Mucosa of descending colon (tissue), 3 donors: ENCODE measurements at regions of chr16 and their contacts with region 1.

Region 1: GRCh38 chr16:16021988-16022682 is 72.7 kb downstream of the ABCC1 start:
- DNase-seq: peak; percentile 86 to 91 (median 87)
- ATAC-seq: peak; percentile 96
- H3K4me3 ChIP-seq: no peak overlapping the region
- H3K4me1 ChIP-seq: peaks cover 20% of the 10 kb centered on the region
- CTCF ChIP-seq: no peak

Region 2: GRCh38 chr16:15636392-15636873 is 385.7 kb before region 1 on chr16:
- intact Hi-C with region 1: no loop called
- DNase-seq: no peak
- ATAC-seq: peak; percentile 58
- H3K4me3 ChIP-seq: no peak overlapping the region
- H3K4me1 ChIP-seq: peaks cover 4% of the 10 kb centered on the region
- CTCF ChIP-seq: no peak

Region 3: DNA sequence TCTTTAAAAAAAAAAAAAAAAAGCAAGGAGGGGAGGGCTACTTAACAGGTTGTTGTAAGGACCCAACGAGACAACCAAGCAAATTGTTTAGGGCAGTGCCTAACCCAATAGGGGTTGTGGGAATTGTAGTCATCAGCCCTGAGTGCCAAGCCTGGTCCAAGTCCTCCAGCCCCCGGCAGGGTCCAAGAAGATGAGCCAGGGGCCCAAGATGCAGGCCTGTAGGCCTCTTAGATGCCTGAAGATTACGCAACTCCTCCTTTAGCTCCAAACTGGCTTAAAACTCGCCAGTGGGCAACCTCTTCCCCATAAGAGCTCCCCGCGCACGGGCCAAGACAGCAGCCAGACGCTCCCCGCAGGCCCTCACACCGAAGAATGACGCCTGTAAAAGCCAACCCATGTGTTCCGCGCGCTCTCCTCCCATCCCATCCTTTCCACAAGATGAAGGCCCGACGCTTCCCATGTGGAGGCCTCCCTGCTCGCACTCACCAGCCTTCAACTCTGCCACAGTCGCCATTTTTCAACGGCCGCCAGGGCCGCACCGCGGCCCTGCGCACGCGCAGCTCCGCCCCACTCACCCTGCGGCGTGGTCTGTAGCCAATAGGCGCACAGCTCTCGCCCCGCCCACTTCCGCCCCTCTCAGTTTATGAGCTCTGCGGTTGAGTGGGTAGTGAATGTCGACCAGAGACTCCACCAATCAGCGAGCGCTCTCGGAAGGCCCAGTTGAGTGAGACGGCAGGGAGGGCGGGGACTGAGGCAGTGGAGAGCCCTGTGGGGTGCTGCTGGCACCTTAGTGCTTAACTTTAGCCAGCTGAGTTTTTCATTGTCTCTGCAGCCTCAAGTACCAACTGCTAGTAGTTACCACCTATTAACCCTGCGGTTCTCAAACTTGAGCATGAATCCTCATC is 133.8 kb before region 1 on chr16 and contains the start of gene CEP20:
- intact Hi-C with region 1: loop called in 1 of 2 experiments (anchors 10 kb)
- DNase-seq: peak; percentile 100
- ATAC-seq: peak; percentile 100
- H3K4me3 ChIP-seq: peak within 1 kb of the TSS; percentile 47
- H3K4me1 ChIP-seq: peaks cover 14% of the 10 kb centered on the region
- CTCF ChIP-seq: no peak
- total RNA-seq, gene CEP20: 23.2 to 26.8 (median 26.4) TPM

Region 4: DNA sequence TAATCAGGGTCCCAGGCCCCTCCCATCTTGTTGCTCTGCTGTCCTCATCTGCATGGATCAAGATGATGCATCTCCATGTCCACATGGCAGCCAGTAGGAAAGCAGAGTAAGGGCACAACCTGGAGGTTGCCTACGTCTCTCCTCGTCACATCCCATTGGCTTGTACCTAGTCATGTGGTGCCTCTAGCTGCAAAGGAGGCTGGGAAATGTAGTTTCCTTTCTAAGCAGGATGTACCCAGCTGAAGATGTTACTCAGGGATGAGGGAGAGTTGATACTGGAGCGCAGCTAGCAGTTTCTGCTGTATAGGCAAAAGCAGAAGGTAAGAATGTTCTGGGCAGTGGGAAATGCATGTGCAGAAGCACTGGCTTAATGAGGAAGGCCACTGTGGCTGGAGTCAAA is 51.9 kb before region 1 on chr16:
- intact Hi-C with region 1: no loop called
- DNase-seq: no peak
- ATAC-seq: peak; percentile 52
- H3K4me3 ChIP-seq: no peak overlapping the region
- H3K4me1 ChIP-seq: no peaks in the 10 kb centered on the region
- CTCF ChIP-seq: no peak